ENCODE measurements at regions of chr17 and their contacts with region 1.

Region 1: GRCh38 chr17:67221062-67221998 is 23.7 kb downstream of the HELZ start:
- DNase-seq: peak in 3 of 9 experiments; percentile 50 to 78 (median 71)
- ATAC-seq: peak; percentile 81
- H3K4me3 ChIP-seq: no peak overlapping the region
- H3K4me3 Mint-ChIP-seq: no peak overlapping the region
- H3K27ac ChIP-seq: no peak overlapping the region
- H3K27ac Mint-ChIP-seq: no peak overlapping the region
- H3K4me1 ChIP-seq: no peaks in the 10 kb centered on the region
- H3K4me1 Mint-ChIP-seq: peaks cover 51% of the 10 kb centered on the region
- H3K27me3 ChIP-seq: no peaks in the 10 kb centered on the region
- H3K27me3 Mint-ChIP-seq: no peaks in the 10 kb centered on the region
- CTCF ChIP-seq: peak; percentile 69

Region 2: DNA sequence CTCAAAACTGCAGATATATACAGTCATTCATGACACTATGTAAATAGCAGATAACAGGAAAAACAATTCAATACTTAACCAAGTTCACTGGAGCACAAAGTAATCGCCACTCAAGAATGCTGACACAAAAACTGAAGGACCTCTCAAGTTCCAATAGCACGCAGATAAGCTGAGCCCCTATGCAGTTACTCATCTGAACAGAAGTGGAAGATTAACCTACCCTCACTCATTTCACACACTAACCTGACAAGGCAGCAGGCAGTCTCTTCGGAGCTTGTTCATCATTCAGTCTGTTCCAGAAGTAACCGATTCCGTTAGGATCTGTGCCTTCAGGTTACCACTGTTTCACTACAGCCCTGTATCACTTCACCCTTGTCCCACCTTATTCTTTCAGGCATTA is 17.7 kb after region 1 on chr17:
- CTCF ChIA-PET with region 1: interaction called, 10 read pairs
- POLR2A ChIA-PET with region 1: no interaction called
- intact Hi-C with region 1: loop called in 1 of 2 experiments (anchors 2 kb)
- DNase-seq: no peak
- ATAC-seq: no peak
- H3K4me3 ChIP-seq: no peak overlapping the region
- H3K4me3 Mint-ChIP-seq: no peak overlapping the region
- H3K27ac ChIP-seq: no peak overlapping the region
- H3K27ac Mint-ChIP-seq: no peak overlapping the region
- H3K4me1 ChIP-seq: peaks cover 25% of the 10 kb centered on the region
- H3K4me1 Mint-ChIP-seq: peaks cover 64% of the 10 kb centered on the region
- H3K27me3 ChIP-seq: no peaks in the 10 kb centered on the region
- H3K27me3 Mint-ChIP-seq: no peaks in the 10 kb centered on the region
- CTCF ChIP-seq: no peak

Region 3: GRCh38 chr17:67272312-67273050 is 51.2 kb after region 1 on chr17:
- CTCF ChIA-PET with region 1: interaction called, 25 read pairs
- POLR2A ChIA-PET with region 1: no interaction called
- intact Hi-C with region 1: no loop called
- DNase-seq: peak in 3 of 9 experiments; percentile 8 to 56 (median 45)
- ATAC-seq: peak; percentile 56
- H3K4me3 ChIP-seq: no peak overlapping the region
- H3K4me3 Mint-ChIP-seq: no peak overlapping the region
- H3K27ac ChIP-seq: no peak overlapping the region
- H3K27ac Mint-ChIP-seq: no peak overlapping the region
- H3K4me1 ChIP-seq: no peaks in the 10 kb centered on the region
- H3K4me1 Mint-ChIP-seq: no peaks in the 10 kb centered on the region
- H3K27me3 ChIP-seq: no peaks in the 10 kb centered on the region
- H3K27me3 Mint-ChIP-seq: no peaks in the 10 kb centered on the region
- CTCF ChIP-seq: no peak

Region 4: DNA sequence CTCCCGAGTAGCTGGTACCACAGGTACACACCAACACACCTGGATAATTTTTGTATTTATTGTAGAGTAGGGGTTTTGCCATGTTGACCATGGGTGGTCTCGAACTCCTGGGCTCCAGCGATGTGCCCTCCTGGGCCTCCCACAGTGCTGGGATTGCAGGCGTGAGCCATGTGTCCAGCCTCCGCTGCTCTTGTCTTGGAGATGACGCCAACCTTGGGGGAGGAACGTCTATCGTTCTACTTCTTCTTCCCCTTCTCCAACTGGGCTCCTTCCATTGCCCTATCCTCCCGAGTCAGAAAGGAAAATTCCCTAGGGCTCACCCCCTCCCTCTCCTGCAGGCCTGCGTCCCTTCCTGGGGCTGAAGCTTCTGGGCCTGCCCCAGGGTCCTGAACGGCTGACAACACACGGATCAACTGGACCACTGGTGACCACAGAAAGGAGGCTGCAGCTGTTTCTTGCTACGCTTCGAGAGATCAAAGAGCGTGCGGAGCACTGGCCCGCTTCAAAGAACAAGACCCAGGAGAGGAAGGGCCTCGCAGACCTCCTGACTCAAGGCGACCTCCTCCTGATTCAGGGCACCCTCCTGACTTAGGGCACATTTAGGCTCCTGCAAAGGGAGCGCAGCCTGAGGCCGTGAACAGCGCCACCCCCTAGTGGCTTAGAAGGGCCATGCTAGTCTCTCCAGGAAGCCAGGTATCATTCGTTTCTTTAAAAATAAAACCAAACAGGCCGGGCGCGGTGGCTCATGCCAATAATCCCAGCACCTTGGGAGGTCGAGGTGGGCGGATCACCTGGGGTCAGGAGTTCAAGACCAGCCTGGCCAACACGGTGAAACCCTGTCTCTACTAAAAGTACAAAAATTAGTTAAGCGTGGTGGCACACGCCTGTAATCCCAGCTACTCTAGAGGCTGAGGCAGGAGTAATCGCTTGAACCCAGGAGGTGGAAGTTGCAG is 72.2 kb after region 1 on chr17:
- CTCF ChIA-PET with region 1: interaction called, 125 read pairs
- POLR2A ChIA-PET with region 1: interaction called, 4 read pairs
- intact Hi-C with region 1: loop called (anchors 1 kb)
- DNase-seq: peak; percentile 37 to 83 (median 69)
- ATAC-seq: peak; percentile 97
- H3K4me3 ChIP-seq: peak overlapping the region in 1 of 2 experiments; percentile 12
- H3K4me3 Mint-ChIP-seq: peak overlapping the region; percentile 57
- H3K27ac ChIP-seq: no peak overlapping the region
- H3K27ac Mint-ChIP-seq: no peak overlapping the region
- H3K4me1 ChIP-seq: no peaks in the 10 kb centered on the region
- H3K4me1 Mint-ChIP-seq: peaks cover 3% of the 10 kb centered on the region
- H3K27me3 ChIP-seq: no peaks in the 10 kb centered on the region
- H3K27me3 Mint-ChIP-seq: no peaks in the 10 kb centered on the region
- CTCF ChIP-seq: peak; percentile 74